Psoas muscle (tissue), 8 donors: ENCODE measurements at regions of chr20 and their contacts with region 1.

Region 1: DNA sequence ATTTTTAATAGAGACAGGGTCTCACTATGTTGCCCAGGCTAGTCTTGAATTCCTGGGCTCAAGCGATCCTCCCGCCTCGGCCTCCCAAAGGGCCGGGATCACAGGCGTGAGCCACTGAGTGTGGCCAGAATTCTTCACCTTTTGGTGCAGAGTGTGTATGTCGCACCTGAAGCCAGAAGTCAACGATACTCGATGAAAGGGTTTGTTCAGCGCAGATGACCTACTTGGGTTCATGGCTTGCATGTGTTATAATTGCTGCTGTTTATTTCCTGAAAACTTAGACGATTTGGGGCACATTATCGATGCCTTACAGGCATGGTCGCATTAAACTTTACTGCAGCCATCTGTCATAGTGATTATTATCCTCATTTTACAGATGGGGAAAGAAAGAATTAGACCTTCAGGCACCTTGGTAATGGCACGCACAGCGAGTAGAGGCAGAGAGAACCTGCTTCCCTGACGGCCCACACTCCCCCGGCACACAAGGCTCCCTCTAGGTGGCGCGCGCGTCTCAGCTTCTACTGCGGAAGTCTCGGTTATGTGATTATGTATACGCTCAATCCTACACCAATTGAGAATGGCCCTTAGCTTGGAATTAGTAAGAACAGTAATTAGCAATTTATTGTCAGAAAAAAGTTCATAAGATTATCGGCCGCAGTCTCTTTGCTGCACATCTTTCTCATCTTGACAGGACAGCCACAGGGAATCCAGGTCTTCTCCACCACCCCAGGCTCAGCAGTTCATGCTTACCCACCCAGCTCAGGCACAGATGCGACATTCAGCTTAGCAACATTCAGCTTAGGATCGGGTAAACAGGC is 212.8 kb upstream of the PROKR2 start:
- DNase-seq: peak; percentile 81 to 82
- ATAC-seq: peak; percentile 74 to 91 (median 81)
- H3K4me3 ChIP-seq: no peak overlapping the region
- H3K27ac ChIP-seq: no peak overlapping the region
- H3K4me1 ChIP-seq: no peaks in the 10 kb centered on the region
- H3K27me3 ChIP-seq: no peaks in the 10 kb centered on the region
- CTCF ChIP-seq: peak; percentile 64

Region 2: GRCh38 chr20:5788385-5788895 is 258.9 kb after region 1 on chr20:
- intact Hi-C with region 1: loop called in 1 of 2 experiments (anchors 2 kb)
- DNase-seq: peak; percentile 54 to 71
- ATAC-seq: peak; percentile 85 to 93 (median 90)
- H3K4me3 ChIP-seq: no peak overlapping the region
- H3K27ac ChIP-seq: no peak overlapping the region
- H3K4me1 ChIP-seq: peaks cover 9% of the 10 kb centered on the region
- H3K27me3 ChIP-seq: no peaks in the 10 kb centered on the region
- CTCF ChIP-seq: peak; percentile 94

Region 3: GRCh38 chr20:5933802-5934436 is 404.4 kb after region 1 on chr20:
- intact Hi-C with region 1: loop called in 1 of 2 experiments (anchors 5 kb)
- DNase-seq: no peak
- ATAC-seq: peak; percentile 51 to 86 (median 74)
- H3K4me3 ChIP-seq: no peak overlapping the region
- H3K27ac ChIP-seq: no peak overlapping the region
- H3K4me1 ChIP-seq: no peaks in the 10 kb centered on the region
- H3K27me3 ChIP-seq: no peaks in the 10 kb centered on the region
- CTCF ChIP-seq: peak; percentile 38

Region 4: DNA sequence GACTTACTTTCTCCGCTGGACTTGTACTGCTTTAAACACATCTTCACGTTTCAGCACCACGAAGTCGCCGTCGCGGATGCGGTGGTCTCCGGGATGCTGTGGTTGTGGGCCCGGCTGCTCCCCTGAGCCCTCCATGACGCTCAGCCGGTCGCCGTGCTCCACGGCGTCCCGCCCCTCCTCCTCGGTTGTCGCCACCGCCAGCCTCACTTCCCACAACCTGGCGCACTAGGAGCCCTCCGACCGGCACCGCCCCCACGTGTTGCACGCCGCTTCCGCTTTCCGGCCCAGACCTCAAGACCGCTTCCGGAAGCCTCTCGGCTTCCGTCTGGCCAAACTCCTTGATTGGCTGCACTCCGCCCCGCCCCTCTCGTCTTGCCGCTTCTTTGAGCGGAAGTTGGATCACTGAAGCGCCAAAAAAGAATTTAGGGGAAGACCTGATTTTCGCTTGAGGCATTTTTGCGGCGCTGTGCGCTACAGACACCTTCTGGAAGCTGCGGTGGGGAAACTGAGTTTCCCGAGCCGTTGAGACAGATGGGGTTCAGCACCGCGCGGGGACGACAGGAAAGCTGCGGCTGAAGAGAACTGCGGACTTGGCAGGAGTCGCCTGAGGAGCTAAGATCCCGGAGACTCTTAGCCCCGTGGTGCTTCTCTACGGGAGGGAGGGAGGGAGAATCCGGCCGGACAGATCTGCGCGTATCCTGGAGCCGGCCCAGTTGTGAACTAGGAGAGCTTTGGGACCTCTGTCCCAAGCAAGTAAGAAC is 420.9 kb after region 1 on chr20 and contains the starts of genes MCM8 and TRMT6:
- intact Hi-C with region 1: loop called in 1 of 2 experiments (anchors 5 kb)
- DNase-seq: peak; percentile 98
- ATAC-seq: peak; percentile 99 to 100 (median 100)
- H3K4me3 ChIP-seq: peak within 1 kb of the TSS; percentile 95
- H3K27ac ChIP-seq: peak within 1 kb of the TSS; percentile 91
- H3K4me1 ChIP-seq: peaks cover 16% of the 10 kb centered on the region
- H3K27me3 ChIP-seq: no peaks in the 10 kb centered on the region
- CTCF ChIP-seq: no peak
- total RNA-seq, gene MCM8: 3.9 to 8.0 (median 6.4) TPM
- total RNA-seq, gene TRMT6: 9.0 to 25.9 (median 21.6) TPM

Region 5: DNA sequence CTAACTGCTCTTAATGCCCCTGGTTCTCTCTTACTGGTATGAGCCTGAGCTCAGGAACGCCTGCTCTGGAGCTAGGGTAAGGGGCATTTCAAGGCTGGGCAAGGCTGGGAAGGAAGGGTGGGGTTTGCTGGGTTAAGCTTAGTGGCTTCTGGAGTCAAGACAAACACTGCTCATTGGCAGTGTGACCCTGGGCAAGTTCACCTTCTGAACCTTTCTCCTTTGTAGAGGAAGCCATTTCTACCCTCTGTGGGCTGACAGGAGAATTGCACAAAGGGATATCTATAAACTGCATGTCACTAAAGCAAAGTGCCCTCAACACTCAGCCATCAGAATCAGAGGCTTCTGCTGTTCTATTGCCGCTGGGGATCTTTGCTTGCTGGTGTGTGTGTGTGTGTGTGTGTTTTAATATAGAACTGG is 544.6 kb after region 1 on chr20:
- intact Hi-C with region 1: loop called (anchors 2 to 5 kb)
- DNase-seq: no peak
- ATAC-seq: peak in 1 of 4 donors; percentile 35
- H3K4me3 ChIP-seq: no peak overlapping the region
- H3K27ac ChIP-seq: no peak overlapping the region
- H3K4me1 ChIP-seq: peaks cover 9% of the 10 kb centered on the region
- H3K27me3 ChIP-seq: no peaks in the 10 kb centered on the region
- CTCF ChIP-seq: peak; percentile 27